Posterior vena cava (tissue), 2 donors: ENCODE measurements at regions of chr3 and their contacts with region 1.

Region 1: DNA sequence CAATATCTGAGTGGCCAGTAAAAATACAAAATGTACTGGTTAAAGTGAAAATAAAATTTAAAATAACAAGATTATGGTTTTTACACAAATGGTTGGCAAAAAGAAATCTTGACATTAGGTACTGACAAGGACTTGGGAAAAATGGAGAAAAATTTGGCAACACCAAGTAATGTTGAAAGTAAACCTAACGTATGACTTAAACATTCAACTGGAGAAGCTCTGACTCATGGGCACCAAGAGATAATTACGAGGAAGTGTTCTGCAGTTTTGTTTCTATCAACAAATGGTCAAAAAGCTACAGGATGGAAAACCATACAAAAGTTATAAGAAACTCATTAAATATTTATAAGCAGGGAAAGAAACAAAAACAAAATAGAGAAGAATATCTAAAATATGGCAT is 177.7 kb downstream of the ZNF385D start:
- DNase-seq: no peak

Region 2: DNA sequence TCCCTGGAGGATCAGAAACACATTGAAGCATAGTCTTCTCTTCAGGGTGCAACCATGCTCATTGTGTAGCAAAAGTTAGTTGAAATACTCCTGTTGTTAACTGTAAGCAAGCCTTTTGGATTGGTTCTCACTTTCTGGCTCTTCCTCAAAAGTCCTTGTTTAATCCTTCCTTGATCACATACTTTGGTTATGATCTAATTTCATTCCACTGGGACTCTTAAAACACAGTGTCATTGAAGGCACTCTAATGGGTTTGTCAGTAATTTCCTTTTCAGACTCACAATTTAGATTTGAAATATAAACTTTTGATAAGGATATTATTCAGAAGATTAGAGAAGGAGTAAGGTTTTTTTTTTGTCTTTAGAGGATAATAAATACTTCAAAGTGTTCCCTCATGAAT is 935.6 kb before region 1 on chr3:
- intact Hi-C with region 1: loop called in 1 of 2 experiments (anchors 5 kb)
- DNase-seq: no peak

Region 3: DNA sequence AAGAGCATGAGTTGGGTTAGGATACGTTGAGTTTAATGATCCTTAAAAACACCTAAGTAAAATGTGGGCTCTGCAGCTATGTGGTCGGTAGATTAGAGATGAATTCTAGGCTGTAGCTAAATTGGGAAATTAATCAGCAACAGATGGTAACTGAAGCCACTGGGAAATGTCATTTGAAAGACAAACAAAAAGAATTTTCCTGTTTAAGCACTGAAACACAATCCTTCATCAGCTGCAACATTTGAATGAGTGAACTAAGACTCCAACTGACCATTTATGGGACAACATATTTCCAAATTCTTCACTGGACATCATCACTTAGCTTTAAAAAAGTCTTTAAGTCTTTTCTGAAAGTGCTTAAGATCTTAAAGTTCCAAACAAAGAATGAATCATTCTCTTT is 49.2 kb before region 1 on chr3:
- intact Hi-C with region 1: no loop called
- DNase-seq: no peak